ENCODE measurements at regions of chr3 and their contacts with region 1.

Region 1: DNA sequence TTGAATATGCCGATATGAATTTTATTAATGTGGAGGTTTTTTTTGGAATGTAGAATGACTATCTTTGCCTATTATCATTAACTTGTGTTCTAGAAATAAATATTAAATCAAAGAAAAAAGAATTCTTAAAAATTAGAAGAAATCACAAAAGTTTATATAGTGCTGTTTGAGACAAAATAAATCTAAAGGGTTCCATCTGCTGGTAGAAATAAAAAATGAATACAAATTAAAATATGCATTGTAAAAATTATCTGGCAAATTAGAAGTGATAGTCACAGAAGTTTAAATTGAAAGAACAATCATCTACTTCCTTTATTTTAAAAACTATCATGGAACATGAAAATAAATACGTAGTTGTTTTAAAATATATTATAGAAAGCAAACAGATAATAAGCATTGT is 22.7 kb upstream of the ZBTB20 start:
- DNase-seq: no peak
- H3K4me3 ChIP-seq: no peak overlapping the region
- H3K27ac ChIP-seq: no peak overlapping the region
- H3K4me1 ChIP-seq: no peaks in the 10 kb centered on the region
- H3K27me3 ChIP-seq: no peaks in the 10 kb centered on the region
- CTCF ChIP-seq: peak in 3 of 4 experiments; percentile 28 to 35 (median 31)
- POLR2A ChIP-seq: no peak

Region 2: GRCh38 chr3:113873814-113874526 is 1295.8 kb before region 1 on chr3:
- intact Hi-C with region 1: no loop called
- DNase-seq: no peak
- H3K4me3 ChIP-seq: no peak overlapping the region
- H3K27ac ChIP-seq: no peak overlapping the region
- H3K4me1 ChIP-seq: no peaks in the 10 kb centered on the region
- H3K27me3 ChIP-seq: no peaks in the 10 kb centered on the region
- CTCF ChIP-seq: no peak
- POLR2A ChIP-seq: no peak

Region 3: DNA sequence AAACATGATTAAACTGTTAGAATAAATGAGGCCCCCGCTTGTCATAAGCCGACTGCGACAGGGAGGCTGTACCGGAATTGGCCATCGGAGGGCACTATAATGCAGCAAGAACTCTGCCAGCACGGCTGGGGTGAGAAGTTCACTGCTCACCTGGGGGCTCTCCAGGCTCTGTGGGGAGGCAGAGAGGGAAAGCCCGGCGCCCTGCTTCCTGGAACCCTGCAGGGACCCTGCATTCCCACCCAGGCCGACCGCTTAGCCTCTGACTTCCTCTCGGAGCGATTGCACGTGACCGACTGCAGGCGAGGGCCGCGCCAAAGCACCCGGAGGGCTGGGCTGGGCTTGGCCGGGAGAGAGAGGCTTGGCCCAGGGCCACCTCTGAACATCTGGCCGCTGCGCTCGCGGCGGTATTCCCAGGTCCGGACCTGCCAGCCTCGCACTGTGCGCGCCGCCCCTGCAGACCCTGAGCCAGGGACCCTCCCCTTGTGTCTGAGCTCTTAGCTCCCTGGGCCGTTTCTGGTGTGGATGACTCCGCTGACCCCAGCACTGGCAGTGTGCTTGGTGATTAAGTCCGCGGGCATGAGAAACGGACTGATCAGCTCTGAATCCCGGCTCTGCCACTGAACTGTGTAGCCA is 1017.2 kb before region 1 on chr3:
- intact Hi-C with region 1: loop called (anchors 10 kb)
- DNase-seq: peak; percentile 53
- H3K4me3 ChIP-seq: peak overlapping the region; percentile 37 to 38
- H3K27ac ChIP-seq: peak overlapping the region in 1 of 2 donors; percentile 3
- H3K4me1 ChIP-seq: no peaks in the 10 kb centered on the region
- H3K27me3 ChIP-seq: no peaks in the 10 kb centered on the region
- CTCF ChIP-seq: peak; percentile 45 to 86 (median 78)
- POLR2A ChIP-seq: no peak

Region 4: DNA sequence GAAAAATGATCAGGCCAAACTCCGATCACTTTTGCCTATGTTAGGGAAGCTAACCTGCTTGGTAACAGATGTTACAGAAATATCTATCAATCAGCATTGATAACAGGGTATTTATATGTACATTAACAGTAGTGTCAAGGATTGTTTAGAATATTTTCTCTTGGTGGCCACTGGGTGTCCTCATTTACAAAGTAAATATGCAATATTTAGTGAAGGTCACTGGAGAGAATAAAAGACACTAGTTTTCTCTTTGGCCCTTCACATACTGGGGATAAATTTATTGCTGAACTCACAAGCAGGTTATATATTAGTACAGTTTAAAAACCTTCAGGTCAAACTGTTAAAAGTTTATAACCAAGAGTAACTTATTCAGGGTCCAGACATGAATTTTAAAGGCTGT is 807.0 kb before region 1 on chr3:
- intact Hi-C with region 1: loop called (anchors 10 kb)
- DNase-seq: no peak
- H3K4me3 ChIP-seq: no peak overlapping the region
- H3K27ac ChIP-seq: no peak overlapping the region
- H3K4me1 ChIP-seq: no peaks in the 10 kb centered on the region
- H3K27me3 ChIP-seq: no peaks in the 10 kb centered on the region
- CTCF ChIP-seq: peak in 3 of 4 experiments; percentile 25 to 57 (median 54)
- POLR2A ChIP-seq: no peak

Region 5: DNA sequence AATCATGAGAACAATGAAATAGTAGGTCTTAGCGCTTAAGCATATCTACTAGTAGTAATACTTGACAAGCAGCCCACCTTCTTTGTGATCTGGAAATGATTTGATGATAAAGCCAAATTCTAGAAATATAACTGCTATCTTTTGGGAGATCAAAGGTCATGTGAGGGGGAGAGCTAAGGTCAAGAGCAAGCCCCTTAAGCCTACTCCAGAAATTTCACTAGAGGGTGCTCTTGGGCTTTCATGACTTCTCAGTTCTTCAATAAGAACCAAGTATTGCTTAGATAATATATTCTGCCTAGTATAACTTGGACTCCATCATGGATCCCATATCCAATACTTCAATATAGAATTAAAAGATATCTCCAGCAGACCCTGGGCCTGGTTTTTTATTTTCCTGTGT is 342.3 kb before region 1 on chr3:
- intact Hi-C with region 1: loop called (anchors 10 kb)
- DNase-seq: no peak
- H3K4me3 ChIP-seq: no peak overlapping the region
- H3K27ac ChIP-seq: no peak overlapping the region
- H3K4me1 ChIP-seq: no peaks in the 10 kb centered on the region
- H3K27me3 ChIP-seq: no peaks in the 10 kb centered on the region
- CTCF ChIP-seq: peak in 3 of 4 experiments; percentile 22 to 45 (median 33)
- POLR2A ChIP-seq: no peak

Region 6: DNA sequence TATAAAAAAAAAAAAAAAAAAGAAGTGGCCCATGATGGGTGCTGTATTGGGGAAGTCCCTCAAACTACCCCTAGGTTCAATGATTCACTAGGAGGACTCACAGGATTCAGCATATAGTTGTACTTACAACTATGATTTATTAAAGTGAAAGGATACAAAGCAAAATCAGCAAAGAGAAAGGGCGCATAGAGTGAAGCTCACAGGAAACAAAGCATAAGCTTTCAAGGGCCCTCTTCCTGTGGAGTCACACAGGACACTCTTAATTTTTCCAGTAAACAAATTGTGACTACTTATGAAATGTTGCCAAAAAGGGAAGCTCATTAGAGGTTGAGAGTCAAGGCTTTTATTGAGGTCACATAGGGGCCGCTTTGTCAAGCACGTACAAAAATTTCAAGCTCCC is 299.8 kb after region 1 on chr3:
- intact Hi-C with region 1: no loop called
- DNase-seq: no peak
- H3K4me3 ChIP-seq: no peak overlapping the region
- H3K27ac ChIP-seq: no peak overlapping the region
- H3K4me1 ChIP-seq: no peaks in the 10 kb centered on the region
- H3K27me3 ChIP-seq: no peaks in the 10 kb centered on the region
- CTCF ChIP-seq: no peak
- POLR2A ChIP-seq: no peak